CD8-positive, alpha-beta T cell (primary cell): ENCODE measurements at regions of chr2 and their contacts with region 1.

Region 1: GRCh38 chr2:189783927-189784867 is at the starts of genes ORMDL1 and PMS1:
- DNase-seq: peak; percentile 86 to 98 (median 95)
- ATAC-seq: peak; percentile 89
- H3K4me3 ChIP-seq: peak within 1 kb of the TSS; percentile 56 to 91
- H3K4me3 Mint-ChIP-seq: peak within 1 kb of the TSS; percentile 97
- H3K27ac ChIP-seq: peak within 1 kb of the TSS; percentile 96 to 97
- H3K27ac Mint-ChIP-seq: peak within 1 kb of the TSS; percentile 97
- H3K4me1 ChIP-seq: peaks cover 45% of the 10 kb centered on the region
- H3K4me1 Mint-ChIP-seq: peaks cover 65% of the 10 kb centered on the region
- H3K27me3 ChIP-seq: no peaks in the 10 kb centered on the region
- H3K27me3 Mint-ChIP-seq: no peaks in the 10 kb centered on the region
- CTCF ChIP-seq: no peak
- total RNA-seq, gene ORMDL1: 105 to 107 TPM
- total RNA-seq, gene PMS1: 12.2 to 15.1 TPM

Region 2: GRCh38 chr2:189440947-189441708 is 343.1 kb before region 1 on chr2 and contains the start of gene WDR75:
- CTCF ChIA-PET with region 1: no interaction called
- POLR2A ChIA-PET with region 1: interaction called, 3 read pairs
- intact Hi-C with region 1: loop called (anchors 1 to 5 kb)
- DNase-seq: peak; percentile 85 to 97 (median 92)
- ATAC-seq: peak; percentile 94
- H3K4me3 ChIP-seq: peak within 1 kb of the TSS; percentile 71 to 92
- H3K4me3 Mint-ChIP-seq: peak within 1 kb of the TSS; percentile 100
- H3K27ac ChIP-seq: peak within 1 kb of the TSS; percentile 96 to 98
- H3K27ac Mint-ChIP-seq: peak within 1 kb of the TSS; percentile 100
- H3K4me1 ChIP-seq: peaks cover 33% of the 10 kb centered on the region
- H3K4me1 Mint-ChIP-seq: peaks cover 12% of the 10 kb centered on the region
- H3K27me3 ChIP-seq: no peaks in the 10 kb centered on the region
- H3K27me3 Mint-ChIP-seq: no peaks in the 10 kb centered on the region
- CTCF ChIP-seq: no peak
- total RNA-seq, gene WDR75: 45.0 to 52.6 TPM

Region 3: DNA sequence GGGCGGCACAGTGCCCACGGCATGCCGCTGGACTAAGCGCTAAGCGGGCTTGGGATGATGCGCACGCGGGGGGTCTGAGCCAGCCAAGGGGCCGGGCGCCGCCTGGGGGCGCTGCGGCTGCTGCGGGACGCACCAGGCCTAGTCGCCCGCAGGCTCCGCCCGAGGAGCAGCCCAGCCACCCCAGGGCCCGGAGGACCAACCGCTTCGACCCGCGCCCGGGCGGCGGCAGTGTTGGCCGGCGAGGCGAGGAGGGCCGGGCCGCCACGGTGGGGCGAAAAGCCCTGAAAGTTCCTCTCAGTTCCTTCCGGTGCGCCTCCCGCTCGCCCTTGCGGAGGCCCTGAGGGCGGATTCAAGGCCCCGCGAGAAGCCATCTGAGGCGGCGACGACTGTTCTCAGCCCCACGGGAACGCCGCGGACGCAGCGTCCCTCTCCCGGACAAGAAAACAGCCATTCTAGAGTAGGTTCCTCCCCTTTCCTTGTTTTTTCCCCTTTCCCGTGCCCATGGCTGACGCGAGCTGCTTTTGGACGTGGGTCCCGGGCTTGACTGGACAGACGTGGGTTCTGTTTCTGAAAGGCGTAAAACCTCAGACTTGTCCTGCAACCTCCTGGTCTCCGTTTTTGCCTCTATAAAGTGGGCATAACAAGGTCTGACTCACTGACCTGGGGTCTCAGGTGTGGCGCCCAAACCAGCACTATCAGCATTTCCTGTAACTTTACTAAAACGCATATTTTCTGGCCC is 109.7 kb before region 1 on chr2 and contains the start of gene ANKAR:
- CTCF ChIA-PET with region 1: no interaction called
- POLR2A ChIA-PET with region 1: interaction called, 3 read pairs
- intact Hi-C with region 1: loop called in 1 of 2 experiments (anchors 5 kb)
- DNase-seq: peak; percentile 64 to 91 (median 79)
- ATAC-seq: peak; percentile 91
- H3K4me3 ChIP-seq: peak within 1 kb of the TSS; percentile 81 to 88
- H3K4me3 Mint-ChIP-seq: peak within 1 kb of the TSS; percentile 91
- H3K27ac ChIP-seq: peak within 1 kb of the TSS; percentile 86 to 97
- H3K27ac Mint-ChIP-seq: peak within 1 kb of the TSS; percentile 99
- H3K4me1 ChIP-seq: peaks cover 11% of the 10 kb centered on the region
- H3K4me1 Mint-ChIP-seq: peaks cover 49% of the 10 kb centered on the region
- H3K27me3 ChIP-seq: no peaks in the 10 kb centered on the region
- H3K27me3 Mint-ChIP-seq: no peaks in the 10 kb centered on the region
- CTCF ChIP-seq: peak; percentile 72
- total RNA-seq, gene ANKAR: 7.3 to 9.2 TPM

Region 4: GRCh38 chr2:189762551-189763298 is 21.5 kb before region 1 on chr2 and contains the start of gene OSGEPL1:
- CTCF ChIA-PET with region 1: interaction called, 10 read pairs
- POLR2A ChIA-PET with region 1: interaction called, 43 read pairs
- intact Hi-C with region 1: loop called (anchors 1 kb)
- DNase-seq: peak; percentile 84 to 97 (median 94)
- ATAC-seq: peak; percentile 92
- H3K4me3 ChIP-seq: peak within 1 kb of the TSS; percentile 69 to 83
- H3K4me3 Mint-ChIP-seq: peak within 1 kb of the TSS; percentile 97
- H3K27ac ChIP-seq: peak within 1 kb of the TSS; percentile 85 to 88
- H3K27ac Mint-ChIP-seq: peak within 1 kb of the TSS; percentile 98
- H3K4me1 ChIP-seq: peaks cover 8% of the 10 kb centered on the region
- H3K4me1 Mint-ChIP-seq: peaks cover 15% of the 10 kb centered on the region
- H3K27me3 ChIP-seq: no peaks in the 10 kb centered on the region
- H3K27me3 Mint-ChIP-seq: no peaks in the 10 kb centered on the region
- CTCF ChIP-seq: peak; percentile 52
- total RNA-seq, gene OSGEPL1: 3.6 to 3.9 TPM

Region 5: DNA sequence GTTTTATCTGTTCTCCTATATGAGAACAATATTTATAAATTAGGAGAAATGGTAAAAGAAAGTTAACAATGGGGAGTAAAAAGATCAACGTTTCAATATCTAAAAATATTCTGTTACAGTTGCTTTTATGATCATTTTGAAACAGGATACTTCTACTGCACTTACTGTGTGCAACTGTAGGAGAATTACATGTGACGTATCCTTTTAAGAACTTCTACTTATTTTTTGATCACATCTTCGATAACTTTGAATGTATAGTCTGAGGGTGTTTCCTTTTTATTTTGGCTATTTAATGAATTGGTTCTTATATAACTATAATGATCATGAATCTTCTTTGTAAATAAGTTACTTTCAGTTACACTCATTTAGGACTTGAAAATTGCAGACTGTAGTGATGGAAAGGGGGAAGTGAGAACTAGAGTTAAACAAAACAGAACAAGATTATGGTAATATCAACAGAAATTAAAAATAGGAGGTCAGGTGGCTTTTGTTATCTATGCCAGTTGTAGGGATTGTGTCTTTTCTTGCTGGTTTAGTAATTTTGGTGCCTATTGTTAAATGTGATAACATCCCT is 168.4 kb after region 1 on chr2:
- CTCF ChIA-PET with region 1: no interaction called
- POLR2A ChIA-PET with region 1: no interaction called
- intact Hi-C with region 1: no loop called
- DNase-seq: no peak
- ATAC-seq: no peak
- H3K4me3 ChIP-seq: no peak overlapping the region
- H3K4me3 Mint-ChIP-seq: no peak overlapping the region
- H3K27ac ChIP-seq: no peak overlapping the region
- H3K27ac Mint-ChIP-seq: no peak overlapping the region
- H3K4me1 ChIP-seq: no peaks in the 10 kb centered on the region
- H3K4me1 Mint-ChIP-seq: no peaks in the 10 kb centered on the region
- H3K27me3 ChIP-seq: no peaks in the 10 kb centered on the region
- H3K27me3 Mint-ChIP-seq: peaks cover 3% of the 10 kb centered on the region
- CTCF ChIP-seq: no peak

Region 6: GRCh38 chr2:189997016-189997415 is 212.8 kb after region 1 on chr2:
- CTCF ChIA-PET with region 1: no interaction called
- POLR2A ChIA-PET with region 1: no interaction called
- intact Hi-C with region 1: no loop called
- DNase-seq: no peak
- ATAC-seq: no peak
- H3K4me3 ChIP-seq: no peak overlapping the region
- H3K4me3 Mint-ChIP-seq: no peak overlapping the region
- H3K27ac ChIP-seq: no peak overlapping the region
- H3K27ac Mint-ChIP-seq: no peak overlapping the region
- H3K4me1 ChIP-seq: no peaks in the 10 kb centered on the region
- H3K4me1 Mint-ChIP-seq: no peaks in the 10 kb centered on the region
- H3K27me3 ChIP-seq: no peaks in the 10 kb centered on the region
- H3K27me3 Mint-ChIP-seq: peaks cover 5% of the 10 kb centered on the region
- CTCF ChIP-seq: no peak

Region 7: GRCh38 chr2:190319555-190320498 is 535.6 kb after region 1 on chr2 and contains the start of gene HIBCH:
- CTCF ChIA-PET with region 1: no interaction called
- POLR2A ChIA-PET with region 1: no interaction called
- intact Hi-C with region 1: loop called in 1 of 2 experiments (anchors 10 kb)
- DNase-seq: peak; percentile 51 to 91 (median 83)
- ATAC-seq: peak; percentile 89
- H3K4me3 ChIP-seq: peak within 1 kb of the TSS; percentile 77 to 94
- H3K4me3 Mint-ChIP-seq: peak within 1 kb of the TSS; percentile 100
- H3K27ac ChIP-seq: peak within 1 kb of the TSS; percentile 66 to 88
- H3K27ac Mint-ChIP-seq: peak within 1 kb of the TSS; percentile 98
- H3K4me1 ChIP-seq: peaks cover 19% of the 10 kb centered on the region
- H3K4me1 Mint-ChIP-seq: peaks cover 50% of the 10 kb centered on the region
- H3K27me3 ChIP-seq: no peaks in the 10 kb centered on the region
- H3K27me3 Mint-ChIP-seq: no peaks in the 10 kb centered on the region
- CTCF ChIP-seq: peak; percentile 70
- total RNA-seq, gene HIBCH: 3.7 to 5.8 TPM

Region 8: GRCh38 chr2:190415794-190416775 is 631.9 kb after region 1 on chr2:
- CTCF ChIA-PET with region 1: no interaction called
- POLR2A ChIA-PET with region 1: no interaction called
- intact Hi-C with region 1: loop called in 1 of 2 experiments (anchors 10 kb)
- DNase-seq: peak in 1 of 9 experiments; percentile 43
- ATAC-seq: peak; percentile 62
- H3K4me3 ChIP-seq: peak overlapping the region in 1 of 2 experiments; percentile 6
- H3K4me3 Mint-ChIP-seq: peak overlapping the region; percentile 64
- H3K27ac ChIP-seq: peak overlapping the region; percentile 32 to 76
- H3K27ac Mint-ChIP-seq: peak overlapping the region; percentile 86
- H3K4me1 ChIP-seq: peaks cover 92% of the 10 kb centered on the region
- H3K4me1 Mint-ChIP-seq: peaks cover 89% of the 10 kb centered on the region
- H3K27me3 ChIP-seq: no peaks in the 10 kb centered on the region
- H3K27me3 Mint-ChIP-seq: no peaks in the 10 kb centered on the region
- CTCF ChIP-seq: no peak

Region 9: DNA sequence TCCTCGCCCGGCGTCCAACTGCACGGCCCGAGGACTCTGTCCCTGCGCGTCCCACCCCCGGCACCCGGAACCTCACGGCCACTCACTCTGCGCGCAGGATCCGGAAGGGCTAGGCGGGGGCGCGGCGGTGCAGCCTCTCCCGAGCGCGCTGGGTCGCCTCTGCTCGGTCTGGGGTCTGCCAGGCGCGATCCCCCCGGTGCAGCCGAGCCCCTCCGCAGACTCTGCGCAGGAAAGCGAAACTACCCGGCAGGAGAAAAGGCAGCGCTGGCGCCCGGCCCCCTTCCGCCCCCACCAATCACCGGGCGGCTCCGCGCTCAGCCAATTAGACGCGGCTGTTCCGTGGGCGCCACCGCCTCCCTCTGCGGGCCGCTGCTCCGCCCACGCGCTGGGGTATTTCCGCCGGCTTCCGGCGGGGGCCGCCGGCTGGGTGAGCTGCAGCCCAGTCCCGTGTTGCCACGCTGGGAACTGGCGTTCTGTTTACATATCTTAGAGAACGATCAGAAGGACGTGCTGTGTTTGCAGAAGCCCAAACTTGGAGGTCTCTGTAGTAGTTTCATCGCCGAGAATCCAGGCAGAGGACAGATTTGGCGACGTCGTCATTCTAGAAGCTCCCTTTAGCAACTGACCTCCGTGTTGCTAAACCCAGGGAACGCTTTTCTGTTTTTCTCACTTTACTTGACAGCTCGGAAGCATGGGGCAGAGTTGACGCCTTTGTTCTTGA is 1229.9 kb after region 1 on chr2 and contains the start of gene STAT1:
- CTCF ChIA-PET with region 1: no interaction called
- POLR2A ChIA-PET with region 1: no interaction called
- intact Hi-C with region 1: loop called (anchors 5 to 10 kb)
- DNase-seq: peak; percentile 93 to 98 (median 96)
- ATAC-seq: peak; percentile 87
- H3K4me3 ChIP-seq: peak within 1 kb of the TSS; percentile 61 to 88
- H3K4me3 Mint-ChIP-seq: no peak within 1 kb of the TSS
- H3K27ac ChIP-seq: peak within 1 kb of the TSS; percentile 91 to 94
- H3K27ac Mint-ChIP-seq: no peak within 1 kb of the TSS
- H3K4me1 ChIP-seq: peaks cover 59% of the 10 kb centered on the region
- H3K4me1 Mint-ChIP-seq: peaks cover 44% of the 10 kb centered on the region
- H3K27me3 ChIP-seq: no peaks in the 10 kb centered on the region
- H3K27me3 Mint-ChIP-seq: no peaks in the 10 kb centered on the region
- CTCF ChIP-seq: no peak
- total RNA-seq, gene STAT1: 66.7 to 69.9 TPM